ENCODE measurements at regions of chr21 and their contacts with region 1.

Region 1: DNA sequence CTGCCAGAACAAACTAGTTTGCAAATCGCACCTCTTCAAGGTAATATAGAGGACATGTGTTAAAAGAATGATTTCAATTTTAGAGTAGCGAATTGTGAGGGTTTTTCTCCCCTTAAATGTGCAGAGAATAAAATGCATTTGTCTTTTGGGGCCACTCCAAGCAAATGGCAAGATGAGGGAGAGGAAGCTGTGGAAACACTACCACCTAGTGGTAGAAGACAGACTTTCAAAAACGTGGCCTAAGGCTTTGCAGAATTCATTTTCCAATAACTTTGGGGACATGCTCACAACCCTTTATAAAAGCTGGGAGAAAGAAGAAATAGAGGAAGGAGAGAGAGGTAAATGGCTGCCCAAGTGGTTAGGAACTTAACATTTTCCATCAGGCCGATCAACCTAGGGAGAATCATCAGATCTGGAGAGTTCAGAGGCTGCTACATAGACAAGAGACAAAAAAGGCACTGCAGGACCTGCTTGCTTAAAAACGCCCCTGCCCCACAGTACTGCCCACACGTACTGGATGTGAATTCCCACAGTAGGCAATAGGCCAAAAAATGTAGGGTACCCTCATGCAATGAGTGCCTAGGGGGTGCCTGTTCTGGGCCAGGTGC is 15.7 kb upstream of the RCAN1 start:
- DNase-seq: peak in 1 of 2 experiments; percentile 17
- H3K4me3 ChIP-seq: no peak overlapping the region
- H3K27ac ChIP-seq: no peak overlapping the region
- H3K4me1 ChIP-seq: no peaks in the 10 kb centered on the region
- H3K27me3 ChIP-seq: no peaks in the 10 kb centered on the region
- CTCF ChIP-seq: peak; percentile 76

Region 2: GRCh38 chr21:34362136-34362444 is 268.6 kb before region 1 on chr21:
- CTCF ChIA-PET with region 1: interaction called, 3 read pairs
- POLR2A ChIA-PET with region 1: no interaction called
- intact Hi-C with region 1: loop called (anchors 1 kb)
- DNase-seq: no peak
- H3K4me3 ChIP-seq: no peak overlapping the region
- H3K27ac ChIP-seq: no peak overlapping the region
- H3K4me1 ChIP-seq: no peaks in the 10 kb centered on the region
- H3K27me3 ChIP-seq: no peaks in the 10 kb centered on the region
- CTCF ChIP-seq: peak; percentile 21; the same call in 1 of the 2 replicates

Measured in PC-9 (cell line).